ENCODE measurements at regions of chr18 and their contacts with region 1.

Region 1: GRCh38 chr18:76803814-76804213 is 18.5 kb upstream of the ZNF236 start:
- DNase-seq: peak; percentile 33 to 73 (median 66)
- ATAC-seq: peak; percentile 84
- H3K4me3 ChIP-seq: no peak overlapping the region
- H3K4me3 Mint-ChIP-seq: peak overlapping the region in 9 of 10 donors; percentile 27 to 71 (median 53)
- H3K27ac ChIP-seq: no peak overlapping the region
- H3K27ac Mint-ChIP-seq: peak overlapping the region in 4 of 9 donors; percentile 4 to 40 (median 4)
- H3K4me1 ChIP-seq: peaks cover 5 to 8% of the 10 kb centered on the region in 2 donors
- H3K4me1 Mint-ChIP-seq: peaks cover 6 to 13% (median 8%) of the 10 kb centered on the region in 7 donors
- H3K27me3 ChIP-seq: no peaks in the 10 kb centered on the region
- H3K27me3 Mint-ChIP-seq: peaks cover 0 to 17% (median 7%) of the 10 kb centered on the region in 5 donors

Region 2: DNA sequence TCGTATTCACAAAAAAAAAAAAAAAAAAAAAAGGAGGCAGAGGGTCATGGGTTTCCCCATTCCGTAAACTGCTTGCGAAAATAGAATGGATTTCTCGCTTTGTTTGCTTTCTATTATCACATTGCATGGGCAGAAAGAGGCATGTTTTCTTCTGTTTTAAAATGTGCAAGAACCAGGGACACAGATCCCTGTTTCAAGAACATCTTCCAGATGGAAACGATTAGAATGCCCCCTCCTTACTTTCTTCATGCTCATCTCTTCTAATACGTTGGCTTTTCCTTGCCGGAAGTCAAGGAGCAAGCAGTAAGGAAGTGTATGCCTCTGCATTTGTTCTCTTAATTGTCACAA is 257.8 kb before region 1 on chr18:
- CTCF ChIA-PET with region 1: no interaction called
- POLR2A ChIA-PET with region 1: no interaction called
- intact Hi-C with region 1: no loop called
- DNase-seq: no peak
- ATAC-seq: no peak
- H3K4me3 ChIP-seq: no peak overlapping the region
- H3K4me3 Mint-ChIP-seq: no peak overlapping the region
- H3K27ac ChIP-seq: no peak overlapping the region
- H3K27ac Mint-ChIP-seq: no peak overlapping the region
- H3K4me1 ChIP-seq: no peaks in the 10 kb centered on the region
- H3K4me1 Mint-ChIP-seq: peaks cover 0 to 5% (median 0%) of the 10 kb centered on the region in 7 donors
- H3K27me3 ChIP-seq: no peaks in the 10 kb centered on the region
- H3K27me3 Mint-ChIP-seq: peaks cover 0 to 21% (median 6%) of the 10 kb centered on the region in 5 donors

Region 3: DNA sequence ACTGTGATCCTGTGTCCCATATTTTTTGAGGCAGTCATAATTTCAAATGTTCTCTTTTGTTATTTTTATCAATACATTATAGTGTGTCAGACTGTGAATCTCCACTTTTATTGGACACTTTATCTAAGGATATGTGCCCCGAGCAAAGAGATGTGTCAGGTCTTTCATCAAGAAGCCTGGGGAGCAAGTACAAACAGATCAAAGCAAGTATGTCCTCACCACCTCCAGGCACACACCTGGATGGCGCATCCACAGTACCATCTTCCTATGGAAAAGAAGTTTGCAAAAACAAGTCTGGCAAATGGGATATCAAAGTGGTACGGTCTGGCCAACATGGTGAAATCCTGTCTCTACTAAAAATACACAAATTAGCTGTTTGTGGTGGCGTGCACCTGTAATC is 62.4 kb before region 1 on chr18:
- CTCF ChIA-PET with region 1: interaction called, 10 read pairs
- POLR2A ChIA-PET with region 1: no interaction called
- intact Hi-C with region 1: no loop called
- DNase-seq: no peak
- ATAC-seq: no peak
- H3K4me3 ChIP-seq: no peak overlapping the region
- H3K4me3 Mint-ChIP-seq: no peak overlapping the region
- H3K27ac ChIP-seq: no peak overlapping the region
- H3K27ac Mint-ChIP-seq: no peak overlapping the region
- H3K4me1 ChIP-seq: no peaks in the 10 kb centered on the region
- H3K4me1 Mint-ChIP-seq: peaks cover 0 to 20% (median 0%) of the 10 kb centered on the region in 7 donors
- H3K27me3 ChIP-seq: no peaks in the 10 kb centered on the region
- H3K27me3 Mint-ChIP-seq: peaks cover 0 to 53% (median 6%) of the 10 kb centered on the region in 5 donors

Region 4: GRCh38 chr18:76847916-76848315 is 44.1 kb after region 1 on chr18:
- CTCF ChIA-PET with region 1: interaction called, 4 read pairs
- POLR2A ChIA-PET with region 1: no interaction called
- intact Hi-C with region 1: loop called in 1 of 2 experiments (anchors 2 kb)
- DNase-seq: no peak
- ATAC-seq: no peak
- H3K4me3 ChIP-seq: no peak overlapping the region
- H3K4me3 Mint-ChIP-seq: no peak overlapping the region
- H3K27ac ChIP-seq: no peak overlapping the region
- H3K27ac Mint-ChIP-seq: no peak overlapping the region
- H3K4me1 ChIP-seq: no peaks in the 10 kb centered on the region
- H3K4me1 Mint-ChIP-seq: peaks cover 18 to 54% (median 47%) of the 10 kb centered on the region in 7 donors
- H3K27me3 ChIP-seq: no peaks in the 10 kb centered on the region
- H3K27me3 Mint-ChIP-seq: no peaks in the 10 kb centered on the region

Region 5: DNA sequence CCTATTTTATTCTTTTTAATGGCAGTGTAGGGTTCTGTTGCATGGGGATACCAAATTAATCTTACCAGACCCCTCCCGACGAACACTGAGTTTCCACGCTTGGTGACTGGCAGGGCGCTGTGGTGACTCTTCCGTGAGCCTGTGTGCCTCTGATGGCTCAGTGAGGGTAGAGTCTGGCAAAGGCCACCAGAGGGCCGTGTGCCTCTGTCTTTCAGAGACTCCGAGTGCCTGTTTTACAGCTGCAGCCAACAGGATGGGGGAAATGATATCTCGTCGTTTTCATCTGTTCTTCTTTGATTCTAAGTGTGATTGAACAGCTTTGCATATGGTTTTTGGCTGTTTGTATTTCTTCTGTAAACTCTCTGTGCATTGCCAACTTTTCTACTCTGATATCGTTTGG is 118.3 kb after region 1 on chr18:
- CTCF ChIA-PET with region 1: interaction called, 4 read pairs
- POLR2A ChIA-PET with region 1: no interaction called
- intact Hi-C with region 1: loop called in 1 of 2 experiments (anchors 1 kb)
- DNase-seq: peak in 8 of 9 donors; percentile 40 to 72 (median 62)
- ATAC-seq: peak; percentile 98
- H3K4me3 ChIP-seq: no peak overlapping the region
- H3K4me3 Mint-ChIP-seq: peak overlapping the region in 1 of 10 donors; percentile 50
- H3K27ac ChIP-seq: no peak overlapping the region
- H3K27ac Mint-ChIP-seq: peak overlapping the region in 7 of 9 donors; percentile 1 to 78 (median 49)
- H3K4me1 ChIP-seq: no peaks in the 10 kb centered on the region
- H3K4me1 Mint-ChIP-seq: peaks cover 14 to 21% (median 18%) of the 10 kb centered on the region in 7 donors
- H3K27me3 ChIP-seq: no peaks in the 10 kb centered on the region
- H3K27me3 Mint-ChIP-seq: no peaks in the 10 kb centered on the region